Gastrocnemius medialis (tissue), 4 donors: ENCODE measurements at regions of chr9 and their contacts with region 1.

Region 1: DNA sequence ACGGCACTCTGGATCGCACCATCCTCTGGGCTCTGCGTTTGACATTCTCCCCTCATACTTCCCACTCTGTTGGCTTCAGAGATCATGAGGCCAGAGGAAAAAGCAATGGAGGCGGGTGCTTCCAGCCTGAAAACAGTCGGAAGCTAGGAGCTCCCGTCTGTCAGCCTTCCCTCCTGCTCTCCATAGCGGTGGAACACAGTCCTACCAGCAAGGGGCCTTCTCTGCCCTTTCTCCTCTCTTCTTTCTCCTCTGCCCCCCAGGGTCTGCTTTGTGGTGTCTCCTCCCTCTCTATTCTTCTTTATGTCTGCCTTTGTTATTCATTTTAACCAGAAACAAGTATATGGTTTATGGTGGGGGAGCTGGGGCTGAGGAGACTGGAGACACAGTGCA is 152.5 kb upstream of the NFIB start:
- DNase-seq: no peak
- ATAC-seq: no peak
- H3K4me3 ChIP-seq: no peak overlapping the region
- H3K27ac ChIP-seq: no peak overlapping the region
- H3K4me1 ChIP-seq: no peaks in the 10 kb centered on the region
- H3K27me3 ChIP-seq: no peaks in the 10 kb centered on the region
- CTCF ChIP-seq: no peak
- POLR2A ChIP-seq: no peak

Region 2: DNA sequence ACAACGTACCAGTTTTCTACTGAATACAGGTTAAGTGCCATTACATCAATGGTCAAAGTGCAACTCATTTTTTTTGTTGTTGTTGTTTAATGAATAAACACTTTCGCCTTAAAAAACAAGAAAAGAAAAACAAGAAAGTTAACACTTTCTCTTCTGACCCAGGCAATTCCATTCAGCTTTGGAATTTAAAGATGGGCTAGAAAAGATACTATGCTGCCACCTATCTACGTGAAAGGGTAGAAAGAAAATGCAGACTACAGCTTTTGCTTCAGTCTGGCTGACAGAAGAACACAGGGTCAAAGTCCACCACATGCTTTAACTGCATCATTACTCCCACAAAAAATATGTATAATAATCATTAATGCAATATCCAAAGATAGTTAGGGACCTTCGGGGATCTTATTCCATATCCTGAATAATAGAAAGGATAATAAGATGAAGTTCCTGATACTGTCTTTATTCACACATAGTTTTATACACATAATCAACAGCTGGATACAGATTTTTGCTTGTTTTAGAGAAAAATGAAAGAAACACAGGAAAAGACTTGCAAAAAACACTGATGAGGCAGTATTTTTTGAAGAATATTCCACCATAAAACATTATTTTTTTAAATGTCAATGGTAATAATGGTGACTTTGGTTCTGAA is 186.4 kb after region 1 on chr9:
- in situ Hi-C with region 1: no loop called
- intact Hi-C with region 1: loop called (anchors 10 kb)
- DNase-seq: no peak
- ATAC-seq: no peak
- H3K4me3 ChIP-seq: no peak overlapping the region
- H3K27ac ChIP-seq: no peak overlapping the region
- H3K4me1 ChIP-seq: no peaks in the 10 kb centered on the region
- H3K27me3 ChIP-seq: no peaks in the 10 kb centered on the region
- CTCF ChIP-seq: peak in 1 of 5 experiments; percentile 38
- POLR2A ChIP-seq: no peak